ENCODE measurements at regions of chr15 and their contacts with region 1.

Region 1: GRCh38 chr15:64521726-64522164 is 61.4 kb downstream of the ZNF609 start:
- DNase-seq: peak in 6 of 10 donors; percentile 48 to 94 (median 50)

Region 2: DNA sequence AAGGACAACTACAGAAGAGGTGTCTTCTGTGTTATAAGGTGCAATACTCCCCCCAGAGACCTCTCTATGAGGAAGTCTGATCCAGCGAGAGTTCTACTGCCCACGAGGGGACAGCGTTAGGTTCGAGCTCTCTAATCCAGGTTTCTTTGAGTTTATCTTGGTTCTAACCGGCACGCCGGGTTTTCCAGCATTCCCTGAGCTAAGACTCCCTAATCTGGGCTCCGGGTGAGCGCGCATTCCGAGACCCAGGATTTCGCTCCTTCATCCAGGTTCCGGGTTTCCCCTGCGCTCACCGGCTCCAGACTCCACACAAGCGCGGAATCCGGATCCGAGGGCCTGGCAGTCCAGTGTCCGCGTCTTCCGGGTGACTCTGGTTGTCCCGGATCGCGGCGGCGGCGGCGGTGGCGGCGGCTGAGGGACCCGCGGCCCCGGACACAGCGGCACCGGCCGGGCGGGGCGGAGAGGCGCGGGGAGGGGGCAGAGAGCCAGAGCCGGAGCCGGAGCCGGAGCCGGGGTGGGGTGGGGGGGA is 61.5 kb before region 1 on chr15 and contains the start of gene ZNF609:
- intact Hi-C with region 1: loop called (anchors 5 kb)
- DNase-seq: peak; percentile 85 to 98 (median 92)

Region 3: DNA sequence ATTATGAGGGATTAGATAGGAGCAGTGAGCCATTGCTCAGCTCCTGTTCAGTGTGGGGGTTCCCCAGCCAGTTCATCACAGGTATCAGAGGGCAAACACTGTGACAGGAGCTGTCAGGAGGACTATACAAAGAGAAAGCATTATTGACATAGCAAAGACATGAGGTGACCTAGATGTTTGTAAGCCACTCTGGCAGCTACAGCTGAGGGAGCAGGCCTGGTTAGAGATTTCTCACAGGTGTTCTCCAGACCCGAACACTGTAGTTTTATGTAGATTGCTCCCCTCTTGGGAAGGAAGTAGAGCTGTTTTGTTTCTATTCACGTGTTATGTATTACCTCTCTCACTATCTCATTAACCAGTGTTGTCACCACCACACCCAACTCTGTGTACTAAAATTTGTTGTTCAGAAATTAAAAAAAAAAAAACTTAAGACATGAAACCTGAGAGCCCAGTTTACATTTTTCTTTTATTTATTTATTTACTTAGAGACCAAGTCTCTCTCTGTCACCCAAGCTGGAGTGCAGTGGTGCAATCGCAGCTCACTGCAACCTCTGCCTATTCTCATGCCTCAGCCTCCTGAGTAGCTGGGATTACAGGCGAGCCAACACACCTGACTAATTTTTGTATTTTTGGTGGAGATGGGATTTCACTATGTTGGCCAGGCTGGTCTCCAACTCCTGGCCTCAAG is 130.0 kb after region 1 on chr15:
- intact Hi-C with region 1: loop called (anchors 10 kb)
- DNase-seq: peak in 1 of 10 donors; percentile 24

Region 4: DNA sequence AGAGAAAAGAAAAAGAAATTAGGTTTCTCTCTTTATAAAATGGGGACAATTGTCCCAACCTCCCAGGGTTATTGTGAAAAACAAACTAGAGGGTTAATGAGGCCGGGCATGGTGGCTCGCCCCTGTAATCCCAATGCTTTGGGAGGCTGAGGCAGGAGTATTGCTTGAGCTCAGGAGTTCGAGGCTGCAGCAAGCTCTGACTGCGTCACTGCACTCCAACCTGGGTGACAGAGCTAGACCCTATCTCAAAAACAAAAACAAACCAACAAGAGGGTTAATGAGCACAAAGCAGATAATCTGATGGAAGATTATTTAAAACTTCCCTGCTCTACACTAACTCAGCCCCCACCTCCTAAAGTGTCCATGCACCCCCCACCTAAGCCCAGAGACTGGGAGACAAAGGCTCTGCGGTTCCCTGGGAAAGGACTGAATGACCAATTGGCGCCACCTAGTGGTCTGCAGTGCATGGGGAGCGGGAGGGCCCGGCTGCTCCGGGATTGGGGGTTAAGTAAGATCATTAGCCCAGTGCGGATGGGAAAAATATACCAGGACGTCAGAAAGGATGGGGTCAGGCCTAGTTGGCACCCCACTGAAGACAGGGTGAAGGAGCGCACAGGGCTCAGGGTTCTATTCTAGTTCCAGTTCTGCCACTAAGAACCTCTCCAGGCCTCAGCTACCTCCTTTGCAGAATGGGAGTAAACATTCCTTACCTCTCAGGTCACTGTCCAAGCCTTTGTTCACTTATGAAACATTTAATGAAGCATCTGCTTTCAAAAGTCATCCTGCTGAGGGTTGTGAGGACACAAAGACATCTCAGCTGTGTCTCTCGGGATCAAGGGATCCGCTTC is 288.1 kb after region 1 on chr15:
- intact Hi-C with region 1: no loop called
- DNase-seq: peak; percentile 43 to 96 (median 86)